ENCODE measurements at regions of chr10 and their contacts with region 1.

Region 1: GRCh38 chr10:33008499-33009243 is 50.6 kb upstream of the ITGB1 start:
- DNase-seq: peak; percentile 65 to 79 (median 68)
- H3K4me3 ChIP-seq: peak overlapping the region; percentile 12 to 25
- H3K4me3 Mint-ChIP-seq: peak overlapping the region; percentile 63 to 90 (median 81)
- H3K27ac ChIP-seq: peak overlapping the region; percentile 57
- H3K27ac Mint-ChIP-seq: peak overlapping the region; percentile 92 to 99 (median 93)
- H3K4me1 ChIP-seq: peaks cover 55% of the 10 kb centered on the region
- H3K4me1 Mint-ChIP-seq: peaks cover 39 to 72% (median 54%) of the 10 kb centered on the region in 4 donors
- H3K27me3 ChIP-seq: no peaks in the 10 kb centered on the region
- H3K27me3 Mint-ChIP-seq: no peaks in the 10 kb centered on the region

Region 2: GRCh38 chr10:32378363-32379317 is 630.0 kb before region 1 on chr10:
- CTCF ChIA-PET with region 1: interaction called, 8 read pairs
- POLR2A ChIA-PET with region 1: interaction called, 6 read pairs
- intact Hi-C with region 1: loop called (anchors 2 kb)
- DNase-seq: peak; percentile 88 to 97 (median 91)
- H3K4me3 ChIP-seq: peak overlapping the region; percentile 74 to 99
- H3K4me3 Mint-ChIP-seq: no peak overlapping the region
- H3K27ac ChIP-seq: peak overlapping the region; percentile 73
- H3K27ac Mint-ChIP-seq: no peak overlapping the region
- H3K4me1 ChIP-seq: peaks cover 34% of the 10 kb centered on the region
- H3K4me1 Mint-ChIP-seq: peaks cover 17 to 24% (median 19%) of the 10 kb centered on the region in 4 donors
- H3K27me3 ChIP-seq: no peaks in the 10 kb centered on the region
- H3K27me3 Mint-ChIP-seq: no peaks in the 10 kb centered on the region

Region 3: GRCh38 chr10:32929632-32930031 is 79.0 kb before region 1 on chr10:
- CTCF ChIA-PET with region 1: interaction called, 5 read pairs
- POLR2A ChIA-PET with region 1: no interaction called
- intact Hi-C with region 1: loop called (anchors 5 kb)
- DNase-seq: peak; percentile 18 to 80 (median 35)
- H3K4me3 ChIP-seq: no peak overlapping the region
- H3K4me3 Mint-ChIP-seq: peak overlapping the region in 7 of 8 donors; percentile 37 to 81 (median 59)
- H3K27ac ChIP-seq: no peak overlapping the region
- H3K27ac Mint-ChIP-seq: peak overlapping the region in 6 of 7 donors; percentile 1 to 90 (median 69)
- H3K4me1 ChIP-seq: peaks cover 72% of the 10 kb centered on the region
- H3K4me1 Mint-ChIP-seq: peaks cover 43 to 90% (median 61%) of the 10 kb centered on the region in 4 donors
- H3K27me3 ChIP-seq: no peaks in the 10 kb centered on the region
- H3K27me3 Mint-ChIP-seq: no peaks in the 10 kb centered on the region

Region 4: GRCh38 chr10:33032654-33033151 is 24.0 kb after region 1 on chr10:
- CTCF ChIA-PET with region 1: interaction called, 75 read pairs
- POLR2A ChIA-PET with region 1: interaction called, 11 read pairs
- intact Hi-C with region 1: loop called (anchors 1 kb)
- DNase-seq: no peak
- H3K4me3 ChIP-seq: no peak overlapping the region
- H3K4me3 Mint-ChIP-seq: peak overlapping the region in 5 of 8 donors; percentile 6 to 50 (median 22)
- H3K27ac ChIP-seq: no peak overlapping the region
- H3K27ac Mint-ChIP-seq: peak overlapping the region; percentile 43 to 90 (median 81)
- H3K4me1 ChIP-seq: peaks cover 57% of the 10 kb centered on the region
- H3K4me1 Mint-ChIP-seq: peaks cover 38 to 55% (median 47%) of the 10 kb centered on the region in 4 donors
- H3K27me3 ChIP-seq: no peaks in the 10 kb centered on the region
- H3K27me3 Mint-ChIP-seq: no peaks in the 10 kb centered on the region

Region 5: GRCh38 chr10:33109788-33110469 is 101.3 kb after region 1 on chr10:
- CTCF ChIA-PET with region 1: interaction called, 50 read pairs
- POLR2A ChIA-PET with region 1: interaction called, 162 read pairs
- intact Hi-C with region 1: loop called (anchors 1 kb)
- DNase-seq: peak; percentile 52 to 59 (median 53)
- H3K4me3 ChIP-seq: peak overlapping the region in 1 of 2 donors; percentile 25
- H3K4me3 Mint-ChIP-seq: peak overlapping the region; percentile 60 to 86 (median 77)
- H3K27ac ChIP-seq: peak overlapping the region; percentile 57
- H3K27ac Mint-ChIP-seq: peak overlapping the region; percentile 91 to 98 (median 98)
- H3K4me1 ChIP-seq: peaks cover 98% of the 10 kb centered on the region
- H3K4me1 Mint-ChIP-seq: peaks cover 67 to 99% (median 83%) of the 10 kb centered on the region in 4 donors
- H3K27me3 ChIP-seq: no peaks in the 10 kb centered on the region
- H3K27me3 Mint-ChIP-seq: no peaks in the 10 kb centered on the region

Region 6: DNA sequence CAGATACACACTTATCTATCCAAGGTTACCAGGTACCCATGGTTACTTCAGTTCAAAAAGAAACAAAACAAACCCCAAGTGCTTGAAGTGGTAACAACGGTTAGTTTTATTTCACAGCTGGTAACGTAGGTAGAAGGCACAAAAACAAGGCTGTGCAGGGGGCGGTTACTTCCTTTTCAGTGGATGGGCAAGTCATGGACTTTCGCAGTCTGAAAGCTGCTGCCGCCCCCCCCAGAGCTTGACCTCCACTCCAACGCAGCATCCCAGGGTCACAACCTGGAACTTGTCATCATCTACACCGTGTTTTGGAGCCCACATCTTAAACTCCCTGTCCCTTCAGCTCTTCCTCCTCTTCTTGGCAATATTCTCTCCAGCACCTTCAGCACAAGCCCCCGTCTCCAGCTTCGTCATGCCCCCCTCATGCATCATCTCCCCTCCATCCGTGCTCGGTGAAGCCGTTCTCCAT is 130.5 kb after region 1 on chr10:
- CTCF ChIA-PET with region 1: interaction called, 61 read pairs
- POLR2A ChIA-PET with region 1: interaction called, 61 read pairs
- intact Hi-C with region 1: no loop called
- DNase-seq: peak; percentile 94 to 97 (median 95)
- H3K4me3 ChIP-seq: peak overlapping the region; percentile 10 to 54
- H3K4me3 Mint-ChIP-seq: peak overlapping the region; percentile 57 to 81 (median 75)
- H3K27ac ChIP-seq: peak overlapping the region; percentile 84
- H3K27ac Mint-ChIP-seq: peak overlapping the region; percentile 98 to 100 (median 100)
- H3K4me1 ChIP-seq: peaks cover 92% of the 10 kb centered on the region
- H3K4me1 Mint-ChIP-seq: peaks cover 63 to 93% (median 80%) of the 10 kb centered on the region in 4 donors
- H3K27me3 ChIP-seq: no peaks in the 10 kb centered on the region
- H3K27me3 Mint-ChIP-seq: no peaks in the 10 kb centered on the region

Region 7: GRCh38 chr10:33330543-33331378 is 322.1 kb after region 1 on chr10:
- CTCF ChIA-PET with region 1: no interaction called
- POLR2A ChIA-PET with region 1: no interaction called
- intact Hi-C with region 1: no loop called
- DNase-seq: peak; percentile 49 to 67 (median 64)
- H3K4me3 ChIP-seq: no peak overlapping the region
- H3K4me3 Mint-ChIP-seq: peak overlapping the region in 4 of 8 donors; percentile 55 to 59 (median 56)
- H3K27ac ChIP-seq: no peak overlapping the region
- H3K27ac Mint-ChIP-seq: no peak overlapping the region
- H3K4me1 ChIP-seq: peaks cover 15% of the 10 kb centered on the region
- H3K4me1 Mint-ChIP-seq: peaks cover 9 to 27% (median 16%) of the 10 kb centered on the region in 4 donors
- H3K27me3 ChIP-seq: peaks cover 13% of the 10 kb centered on the region
- H3K27me3 Mint-ChIP-seq: peaks cover 50% of the 10 kb centered on the region in 2 donors

Measured in CD4-positive, alpha-beta memory T cell (primary cell).